Calu3 (cell line): ENCODE measurements at regions of chr6 and their contacts with region 1.

Region 1: DNA sequence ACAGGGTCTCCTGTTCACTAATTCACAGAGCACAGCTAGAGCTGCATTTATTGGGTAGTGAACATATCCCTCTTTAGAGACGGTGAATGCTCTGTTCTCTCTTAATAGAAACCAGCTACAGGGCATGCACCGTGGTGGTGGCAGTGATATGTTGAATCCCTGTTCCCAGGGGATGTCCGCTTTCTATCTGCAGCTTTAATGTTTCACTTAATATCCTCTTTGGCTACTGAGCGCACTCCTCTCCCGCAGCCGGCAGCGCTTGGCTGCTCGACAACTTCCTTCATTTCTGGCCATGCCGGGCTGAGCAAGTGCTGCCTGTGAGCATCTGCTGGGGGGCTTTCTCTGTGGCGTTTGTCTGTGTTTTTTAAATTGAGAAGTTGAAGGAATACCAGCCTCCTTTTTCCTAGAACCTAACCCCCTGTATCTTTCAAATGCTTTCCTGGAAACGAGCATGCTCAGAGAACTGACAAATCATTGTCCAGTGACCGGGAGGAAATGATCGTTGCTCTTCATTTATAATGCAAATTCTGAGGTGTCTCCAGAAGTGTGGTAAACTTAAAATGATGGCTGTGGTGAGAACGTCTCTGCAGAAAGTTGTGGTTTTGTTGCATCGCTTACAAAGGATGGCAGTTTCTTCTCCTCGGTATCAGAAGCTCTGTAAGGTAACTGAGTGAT is 297.9 kb downstream of the UTRN start:
- DNase-seq: no peak
- H3K4me3 Mint-ChIP-seq: no peak overlapping the region
- H3K27ac Mint-ChIP-seq: no peak overlapping the region
- H3K4me1 Mint-ChIP-seq: no peaks in the 10 kb centered on the region
- H3K27me3 Mint-ChIP-seq: no peaks in the 10 kb centered on the region
- CTCF ChIP-seq: no peak

Region 2: DNA sequence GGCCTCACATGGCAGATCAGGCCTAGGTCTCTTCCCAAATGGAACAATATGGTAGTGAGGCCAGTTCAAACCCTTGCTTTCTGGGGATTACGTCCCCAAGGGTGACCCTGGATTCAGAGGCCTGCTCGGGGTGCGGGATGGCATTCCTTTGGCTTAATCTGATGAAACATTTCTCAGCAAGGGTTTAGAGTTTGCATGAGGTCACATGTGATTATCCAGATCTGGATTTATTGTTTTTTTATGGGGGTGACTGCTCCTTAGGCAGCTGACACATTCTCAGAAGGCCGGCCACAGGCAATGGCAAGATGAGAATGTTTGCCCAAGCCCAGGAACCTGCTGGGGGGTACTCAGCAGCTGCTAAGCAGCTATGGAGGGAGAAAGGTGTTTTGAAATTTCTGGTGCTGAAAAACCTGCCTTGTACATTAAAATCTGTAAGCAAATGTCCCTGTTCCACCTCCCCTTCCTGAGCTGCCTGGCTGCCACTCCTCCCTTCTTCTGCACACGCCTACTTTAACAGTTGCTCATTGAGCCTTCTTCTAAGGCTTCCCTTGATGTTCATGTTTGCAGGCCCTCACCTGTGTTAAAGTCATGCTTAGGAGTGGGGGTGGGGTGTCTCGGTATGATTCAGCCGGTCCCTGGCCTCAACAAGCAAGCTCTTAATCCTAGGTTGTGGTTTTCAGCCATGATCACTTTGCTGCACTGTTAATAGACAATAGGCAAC is 1033.7 kb before region 1 on chr6:
- CTCF ChIA-PET with region 1: no interaction called
- intact Hi-C with region 1: no loop called
- DNase-seq: no peak
- H3K4me3 Mint-ChIP-seq: no peak overlapping the region
- H3K27ac Mint-ChIP-seq: no peak overlapping the region
- H3K4me1 Mint-ChIP-seq: peaks cover 33% of the 10 kb centered on the region
- H3K27me3 Mint-ChIP-seq: no peaks in the 10 kb centered on the region
- CTCF ChIP-seq: no peak

Region 3: GRCh38 chr6:144027932-144028587 is 555.0 kb before region 1 on chr6:
- CTCF ChIA-PET with region 1: no interaction called
- intact Hi-C with region 1: no loop called
- DNase-seq: no peak
- H3K4me3 Mint-ChIP-seq: no peak overlapping the region
- H3K27ac Mint-ChIP-seq: no peak overlapping the region
- H3K4me1 Mint-ChIP-seq: peaks cover 21% of the 10 kb centered on the region
- H3K27me3 Mint-ChIP-seq: no peaks in the 10 kb centered on the region
- CTCF ChIP-seq: no peak

Region 4: GRCh38 chr6:144778773-144779492 is 195.9 kb after region 1 on chr6:
- CTCF ChIA-PET with region 1: interaction called, 4 read pairs
- intact Hi-C with region 1: loop called (anchors 10 kb)
- DNase-seq: no peak
- H3K4me3 Mint-ChIP-seq: no peak overlapping the region
- H3K27ac Mint-ChIP-seq: no peak overlapping the region
- H3K4me1 Mint-ChIP-seq: peaks cover 15% of the 10 kb centered on the region
- H3K27me3 Mint-ChIP-seq: no peaks in the 10 kb centered on the region
- CTCF ChIP-seq: no peak

Region 5: DNA sequence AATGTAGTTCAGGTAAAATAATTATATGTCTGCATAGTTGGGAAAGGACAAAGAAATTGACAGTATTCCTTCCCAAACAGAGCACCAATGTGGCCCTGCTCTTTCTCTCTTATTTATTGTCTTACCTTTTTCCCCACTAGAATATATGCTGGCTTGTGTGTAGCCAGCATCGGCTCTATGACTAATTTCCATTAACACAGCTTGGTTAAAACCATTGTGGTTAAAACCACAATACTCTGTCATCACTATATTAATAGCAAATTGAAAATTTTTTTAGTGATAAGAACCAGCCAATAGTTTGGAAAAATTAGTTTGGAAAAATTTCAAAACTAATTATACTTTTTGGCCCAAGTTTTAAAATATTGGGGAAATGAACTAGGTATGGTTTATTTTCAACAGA is 237.2 kb after region 1 on chr6:
- CTCF ChIA-PET with region 1: no interaction called
- intact Hi-C with region 1: no loop called
- DNase-seq: no peak
- H3K4me3 Mint-ChIP-seq: no peak overlapping the region
- H3K27ac Mint-ChIP-seq: no peak overlapping the region
- H3K4me1 Mint-ChIP-seq: no peaks in the 10 kb centered on the region
- H3K27me3 Mint-ChIP-seq: no peaks in the 10 kb centered on the region
- CTCF ChIP-seq: no peak

Region 6: DNA sequence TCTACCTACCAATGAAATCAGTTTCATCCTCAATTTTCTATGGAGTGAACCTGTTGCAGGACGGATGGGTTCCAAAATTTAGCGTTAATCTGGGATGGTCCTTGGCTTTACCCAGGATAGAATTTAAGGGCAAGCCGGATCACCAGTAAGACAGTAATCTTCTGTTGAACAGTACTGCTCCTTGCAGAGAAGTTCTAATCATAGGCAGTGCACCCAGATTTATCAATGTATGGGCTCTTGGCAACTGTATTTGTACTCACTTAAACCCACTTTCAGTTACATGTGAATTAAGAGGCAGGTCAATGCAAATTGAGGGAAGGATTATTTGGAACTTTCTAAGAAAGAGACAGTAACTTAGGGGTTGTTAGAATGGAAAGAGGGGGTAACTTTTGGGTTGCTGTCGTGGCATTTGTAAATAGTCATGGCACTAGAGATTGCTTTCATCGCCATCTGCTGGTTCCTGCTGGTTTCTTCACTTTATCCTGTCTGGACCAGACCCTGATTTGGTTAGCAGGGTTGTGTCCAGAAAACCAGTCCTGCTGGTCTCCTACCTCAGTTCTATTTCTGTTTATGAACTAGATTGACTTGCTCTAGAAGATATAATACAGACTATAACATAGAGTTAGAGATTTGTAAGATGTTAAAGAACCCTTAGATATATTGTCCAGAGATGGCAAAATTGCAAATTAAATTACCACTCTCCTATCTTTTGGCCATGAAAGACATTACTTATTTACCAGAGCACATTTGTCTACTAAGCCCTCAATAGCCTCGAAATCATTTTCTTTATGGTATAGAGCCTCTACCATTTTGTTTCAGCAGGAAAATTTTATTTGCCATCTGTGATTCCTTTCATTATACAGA is 348.3 kb after region 1 on chr6:
- CTCF ChIA-PET with region 1: no interaction called
- intact Hi-C with region 1: loop called (anchors 2 kb)
- DNase-seq: peak; percentile 39
- H3K4me3 Mint-ChIP-seq: no peak overlapping the region
- H3K27ac Mint-ChIP-seq: no peak overlapping the region
- H3K4me1 Mint-ChIP-seq: no peaks in the 10 kb centered on the region
- H3K27me3 Mint-ChIP-seq: no peaks in the 10 kb centered on the region
- CTCF ChIP-seq: peak; percentile 35

Region 7: DNA sequence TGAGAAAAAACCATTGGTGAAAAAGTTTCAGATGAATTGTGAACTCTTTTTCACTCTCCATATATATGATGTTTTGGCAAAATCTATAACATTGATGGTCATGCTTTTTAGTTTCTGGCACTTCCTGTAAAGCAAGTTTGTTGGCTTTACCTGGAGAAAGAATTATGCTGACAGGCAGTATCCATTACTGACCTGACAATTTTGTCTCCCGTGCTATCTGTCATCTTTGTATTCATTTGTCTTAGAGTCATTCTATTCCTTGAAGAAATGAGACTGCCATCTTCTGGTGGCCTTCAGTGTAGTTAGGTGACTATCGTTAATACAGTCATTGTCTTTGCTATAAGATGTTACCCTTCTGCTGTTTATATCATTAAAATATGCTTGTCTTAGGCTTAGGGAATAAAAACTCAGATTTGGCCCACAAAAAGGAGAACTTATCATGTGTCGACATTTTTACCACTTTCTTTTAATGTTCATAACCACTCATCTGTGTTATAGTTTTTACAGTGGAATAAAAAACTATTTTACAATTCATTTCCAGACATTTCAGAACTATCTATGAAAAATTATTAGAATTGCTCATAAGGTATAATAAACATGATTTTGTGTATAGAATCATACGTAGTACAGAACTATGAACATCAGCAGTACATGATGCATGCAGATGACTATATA is 445.2 kb after region 1 on chr6:
- CTCF ChIA-PET with region 1: no interaction called
- intact Hi-C with region 1: loop called (anchors 1 kb)
- DNase-seq: peak; percentile 28
- H3K4me3 Mint-ChIP-seq: no peak overlapping the region
- H3K27ac Mint-ChIP-seq: no peak overlapping the region
- H3K4me1 Mint-ChIP-seq: peaks cover 8% of the 10 kb centered on the region
- H3K27me3 Mint-ChIP-seq: no peaks in the 10 kb centered on the region
- CTCF ChIP-seq: no peak

Region 8: GRCh38 chr6:145137426-145137825 is 554.4 kb after region 1 on chr6:
- CTCF ChIA-PET with region 1: no interaction called
- intact Hi-C with region 1: loop called (anchors 5 kb)
- DNase-seq: no peak
- H3K4me3 Mint-ChIP-seq: no peak overlapping the region
- H3K27ac Mint-ChIP-seq: no peak overlapping the region
- H3K4me1 Mint-ChIP-seq: no peaks in the 10 kb centered on the region
- H3K27me3 Mint-ChIP-seq: no peaks in the 10 kb centered on the region
- CTCF ChIP-seq: no peak

Region 9: DNA sequence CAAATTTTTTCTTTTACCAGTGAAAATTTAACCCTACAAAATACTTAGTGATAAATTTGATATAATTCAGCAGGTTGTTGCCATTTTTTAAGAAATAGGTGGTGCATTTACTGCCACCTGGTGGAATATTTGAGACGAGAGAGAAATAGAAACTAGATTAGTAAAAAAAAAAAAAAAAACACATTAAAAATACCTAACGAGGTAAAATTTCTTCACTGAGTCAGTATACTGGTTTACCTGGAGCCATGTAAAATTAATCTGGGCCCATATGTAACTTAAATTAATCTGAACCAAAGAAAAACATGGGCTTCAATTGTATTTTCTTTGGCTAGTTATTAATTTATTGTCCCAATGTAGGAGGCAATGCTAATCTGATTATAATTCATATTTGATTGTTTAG is 631.5 kb after region 1 on chr6:
- CTCF ChIA-PET with region 1: no interaction called
- intact Hi-C with region 1: loop called (anchors 5 kb)
- DNase-seq: peak; percentile 8
- H3K4me3 Mint-ChIP-seq: no peak overlapping the region
- H3K27ac Mint-ChIP-seq: no peak overlapping the region
- H3K4me1 Mint-ChIP-seq: no peaks in the 10 kb centered on the region
- H3K27me3 Mint-ChIP-seq: no peaks in the 10 kb centered on the region
- CTCF ChIP-seq: no peak